GM23248 (cell line): ENCODE measurements at regions of chr19 and their contacts with region 1.

Region 1: GRCh38 chr19:2750808-2751443 is 11.1 kb upstream of the SLC39A3 start:
- DNase-seq: no peak
- H3K4me3 ChIP-seq: no peak overlapping the region
- H3K27ac ChIP-seq: no peak overlapping the region
- H3K4me1 ChIP-seq: no peaks in the 10 kb centered on the region
- H3K27me3 ChIP-seq: peaks cover 3% of the 10 kb centered on the region; the same call in 1 of the 2 replicates

Region 2: DNA sequence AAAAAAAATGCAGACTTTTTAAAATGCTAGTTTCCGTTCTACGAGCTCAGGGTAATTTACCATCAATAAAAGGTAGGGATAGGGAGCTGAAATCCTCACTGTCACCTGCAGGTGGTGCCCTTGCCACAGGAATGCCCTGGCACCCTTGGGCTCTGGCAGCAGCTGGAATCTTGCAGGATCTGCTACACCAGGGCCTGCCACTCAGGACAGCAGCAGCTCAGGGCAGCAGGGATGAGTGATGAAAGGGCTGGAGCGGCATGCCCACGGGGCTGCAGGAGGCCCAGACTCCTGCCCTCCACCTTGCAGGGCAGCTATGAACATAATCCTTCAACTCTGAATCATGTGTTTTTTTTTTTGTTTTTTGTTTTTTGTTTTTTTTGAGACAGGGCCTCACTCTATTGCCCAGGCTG is 102.4 kb before region 1 on chr19:
- in situ Hi-C with region 1: loop called (anchors 5 kb)
- DNase-seq: peak; percentile 83
- H3K4me3 ChIP-seq: no peak overlapping the region
- H3K27ac ChIP-seq: no peak overlapping the region
- H3K4me1 ChIP-seq: no peaks in the 10 kb centered on the region
- H3K27me3 ChIP-seq: no peaks in the 10 kb centered on the region

Region 3: DNA sequence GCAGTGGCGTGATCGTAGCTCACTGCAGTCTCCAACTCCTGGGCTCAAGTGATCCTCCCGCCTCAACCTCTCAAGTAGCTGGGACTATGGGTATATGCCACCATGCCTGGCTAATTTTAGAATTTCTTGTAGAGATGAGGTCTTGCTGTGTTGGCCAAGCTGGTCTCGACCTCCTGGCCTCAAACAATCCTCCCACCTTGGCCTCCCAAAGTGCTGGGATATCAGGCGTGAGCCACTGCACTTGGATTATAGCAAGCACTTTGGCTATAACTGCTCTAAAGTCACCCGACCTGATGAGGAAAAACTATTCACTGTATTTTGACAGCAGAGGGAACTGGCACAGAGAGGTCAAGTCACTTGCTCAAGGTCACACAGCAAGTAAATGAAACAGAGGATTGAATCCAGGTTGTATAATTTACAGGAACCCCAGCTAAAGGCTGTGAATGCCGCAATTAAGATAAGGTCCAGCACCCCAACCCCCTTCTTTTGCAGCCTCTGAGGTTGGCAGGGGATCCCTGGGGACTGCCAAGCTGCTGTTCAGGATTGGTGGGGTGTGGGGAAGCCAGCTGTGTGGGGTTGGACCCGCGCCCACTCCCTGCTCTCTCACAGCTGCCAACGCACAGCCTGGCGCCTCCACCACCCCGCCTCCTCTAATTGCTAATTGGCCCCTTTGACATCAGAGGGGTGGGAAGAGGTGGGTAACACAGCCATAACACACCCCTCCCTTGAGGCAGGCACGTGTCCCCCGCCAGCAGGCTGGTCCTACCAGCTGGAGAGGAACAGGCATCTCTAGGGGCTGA is 1545.2 kb after region 1 on chr19:
- in situ Hi-C with region 1: no loop called
- DNase-seq: no peak
- H3K4me3 ChIP-seq: no peak overlapping the region
- H3K27ac ChIP-seq: no peak overlapping the region
- H3K4me1 ChIP-seq: no peaks in the 10 kb centered on the region
- H3K27me3 ChIP-seq: no peaks in the 10 kb centered on the region; the same call in 1 of the 2 replicates